HepG2 (cell line): ENCODE measurements at regions of chr5 and their contacts with region 1.

Region 1: DNA sequence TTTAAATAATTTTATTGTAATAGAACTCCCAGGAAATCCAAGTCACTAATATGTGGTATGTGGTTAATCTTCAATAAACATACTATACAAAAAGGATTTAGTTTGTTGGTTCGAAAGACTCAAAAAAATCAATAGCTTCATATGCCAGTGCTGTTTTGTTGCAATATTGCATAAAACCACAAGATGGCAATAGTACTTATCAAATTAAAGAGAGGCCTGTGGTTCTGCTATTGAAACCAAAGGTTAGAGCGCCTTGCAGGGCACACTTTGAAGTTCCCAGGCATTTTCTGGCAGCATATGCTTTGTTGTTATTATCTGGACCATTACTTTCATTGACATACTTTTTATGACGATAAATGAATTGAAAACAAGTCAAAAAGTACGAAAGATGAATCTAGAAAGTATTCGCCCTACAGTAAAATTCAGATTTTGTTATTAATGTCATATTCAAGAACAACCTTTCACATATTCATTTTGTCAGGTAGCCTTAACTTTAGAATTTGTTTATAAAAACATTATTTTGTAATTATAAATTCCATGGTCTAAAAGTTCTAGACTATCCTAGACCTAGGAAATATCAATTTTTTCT is 316.3 kb downstream of the MCTP1 start:
- DNase-seq: peak; percentile 75
- ATAC-seq: peak; percentile 83
- H3K4me3 ChIP-seq: no peak overlapping the region
- H3K27ac ChIP-seq: no peak overlapping the region
- H3K4me1 ChIP-seq: no peaks in the 10 kb centered on the region
- H3K27me3 ChIP-seq: no peaks in the 10 kb centered on the region
- CTCF ChIP-seq: peak; percentile 72
- EP300 ChIP-seq: no peak
- POLR2A ChIP-seq: no peak
- RAD21 ChIP-seq: peak; percentile 44

Region 2: DNA sequence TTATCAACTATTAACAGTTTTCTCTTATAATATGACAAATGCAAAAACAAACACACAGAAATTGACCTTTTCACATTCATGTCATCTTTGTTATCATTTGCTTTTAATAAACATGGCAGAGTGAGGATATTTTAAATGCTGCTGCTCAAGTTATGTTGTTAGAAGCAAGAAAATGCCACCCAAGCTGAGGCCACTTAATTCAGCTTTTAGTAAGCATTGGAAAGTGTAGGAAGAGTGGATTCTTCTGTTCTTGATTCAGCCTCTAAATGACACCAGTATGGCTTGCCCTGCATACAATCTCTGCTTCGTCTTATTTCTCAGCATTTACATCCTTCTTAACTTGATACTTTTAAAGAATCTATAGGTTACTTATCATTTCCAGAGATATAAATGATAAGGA is 806.8 kb before region 1 on chr5:
- CTCF ChIA-PET with region 1: no interaction called
- POLR2A ChIA-PET with region 1: no interaction called
- in situ Hi-C with region 1: no loop called
- intact Hi-C with region 1: no loop called
- DNase-seq: no peak
- ATAC-seq: no peak
- H3K4me3 ChIP-seq: no peak overlapping the region
- H3K27ac ChIP-seq: no peak overlapping the region
- H3K4me1 ChIP-seq: no peaks in the 10 kb centered on the region
- H3K27me3 ChIP-seq: no peaks in the 10 kb centered on the region
- CTCF ChIP-seq: no peak
- EP300 ChIP-seq: no peak
- POLR2A ChIP-seq: no peak
- RAD21 ChIP-seq: no peak

Region 3: DNA sequence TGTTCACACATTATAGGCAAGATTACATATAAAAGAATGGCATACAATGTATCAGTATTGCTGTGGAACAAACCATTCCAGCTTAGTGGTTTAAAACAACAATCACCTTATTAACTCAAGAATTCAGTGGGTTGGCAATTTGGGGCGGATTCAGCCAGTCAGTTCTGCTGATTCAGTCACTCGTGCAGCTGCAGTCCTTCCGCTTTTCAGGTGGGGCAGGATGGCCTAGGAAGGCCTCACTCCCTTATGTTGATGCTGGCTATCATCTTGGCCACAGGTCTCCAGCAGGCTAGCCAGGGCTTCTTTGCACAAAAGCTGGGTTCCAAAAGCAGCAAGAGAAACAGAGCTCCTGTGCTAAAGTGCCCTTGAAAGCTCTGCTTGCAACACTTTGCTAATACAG is 165.7 kb after region 1 on chr5:
- CTCF ChIA-PET with region 1: no interaction called
- POLR2A ChIA-PET with region 1: no interaction called
- in situ Hi-C with region 1: no loop called
- intact Hi-C with region 1: no loop called
- DNase-seq: no peak
- ATAC-seq: no peak
- H3K4me3 ChIP-seq: no peak overlapping the region
- H3K27ac ChIP-seq: no peak overlapping the region
- H3K4me1 ChIP-seq: peaks cover 6% of the 10 kb centered on the region; the same call in 1 of the 2 replicates
- H3K27me3 ChIP-seq: no peaks in the 10 kb centered on the region
- CTCF ChIP-seq: no peak
- EP300 ChIP-seq: no peak
- POLR2A ChIP-seq: no peak
- RAD21 ChIP-seq: no peak

Region 4: GRCh38 chr5:95178046-95178651 is 209.5 kb after region 1 on chr5:
- CTCF ChIA-PET with region 1: no interaction called
- POLR2A ChIA-PET with region 1: no interaction called
- in situ Hi-C with region 1: no loop called
- intact Hi-C with region 1: no loop called
- DNase-seq: peak; percentile 7
- ATAC-seq: peak; percentile 78
- H3K4me3 ChIP-seq: no peak overlapping the region
- H3K27ac ChIP-seq: no peak overlapping the region
- H3K4me1 ChIP-seq: no peaks in the 10 kb centered on the region
- H3K27me3 ChIP-seq: no peaks in the 10 kb centered on the region
- CTCF ChIP-seq: no peak
- EP300 ChIP-seq: no peak
- POLR2A ChIP-seq: no peak
- RAD21 ChIP-seq: no peak

Region 5: DNA sequence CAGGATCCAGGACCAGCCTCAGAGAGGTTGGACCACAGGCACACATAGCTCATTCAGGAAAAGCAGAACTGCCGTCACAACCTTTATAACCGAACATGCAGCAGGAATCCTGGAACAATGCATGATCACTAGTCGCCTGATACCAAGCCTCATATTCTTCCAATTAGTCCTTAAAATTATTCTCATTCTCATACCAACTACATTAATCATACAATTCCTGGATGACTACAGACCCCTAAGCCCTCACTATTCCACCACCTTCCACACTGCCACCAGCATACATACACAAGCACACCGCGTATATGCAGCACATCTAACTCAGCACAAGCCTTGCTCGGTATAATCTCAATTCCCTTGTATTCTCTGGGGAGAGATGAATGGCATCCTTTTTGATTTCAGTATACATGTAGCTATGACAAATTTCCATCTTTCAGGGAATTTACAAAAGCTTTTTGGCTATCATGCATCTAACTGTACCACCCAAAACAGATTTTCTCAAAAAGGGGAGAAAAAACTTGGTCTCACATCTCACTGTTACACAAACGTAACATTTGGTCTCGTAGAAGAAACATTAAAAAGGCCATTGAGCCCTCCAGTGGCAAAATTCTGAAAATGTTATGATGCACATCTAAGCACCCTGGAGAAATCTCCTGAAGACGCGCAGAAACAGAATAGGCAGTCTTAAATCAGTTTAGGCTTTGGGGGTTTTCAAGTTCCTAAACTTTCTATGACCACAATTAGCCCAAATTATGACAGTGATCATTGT is 270.1 kb after region 1 on chr5:
- CTCF ChIA-PET with region 1: no interaction called
- POLR2A ChIA-PET with region 1: no interaction called
- in situ Hi-C with region 1: no loop called
- intact Hi-C with region 1: loop called (anchors 1 kb)
- DNase-seq: no peak
- ATAC-seq: no peak
- H3K4me3 ChIP-seq: no peak overlapping the region
- H3K27ac ChIP-seq: no peak overlapping the region
- H3K4me1 ChIP-seq: no peaks in the 10 kb centered on the region
- H3K27me3 ChIP-seq: no peaks in the 10 kb centered on the region; a peak in 1 of 5 replicates
- CTCF ChIP-seq: peak; percentile 36
- EP300 ChIP-seq: no peak
- POLR2A ChIP-seq: no peak
- RAD21 ChIP-seq: no peak

Region 6: DNA sequence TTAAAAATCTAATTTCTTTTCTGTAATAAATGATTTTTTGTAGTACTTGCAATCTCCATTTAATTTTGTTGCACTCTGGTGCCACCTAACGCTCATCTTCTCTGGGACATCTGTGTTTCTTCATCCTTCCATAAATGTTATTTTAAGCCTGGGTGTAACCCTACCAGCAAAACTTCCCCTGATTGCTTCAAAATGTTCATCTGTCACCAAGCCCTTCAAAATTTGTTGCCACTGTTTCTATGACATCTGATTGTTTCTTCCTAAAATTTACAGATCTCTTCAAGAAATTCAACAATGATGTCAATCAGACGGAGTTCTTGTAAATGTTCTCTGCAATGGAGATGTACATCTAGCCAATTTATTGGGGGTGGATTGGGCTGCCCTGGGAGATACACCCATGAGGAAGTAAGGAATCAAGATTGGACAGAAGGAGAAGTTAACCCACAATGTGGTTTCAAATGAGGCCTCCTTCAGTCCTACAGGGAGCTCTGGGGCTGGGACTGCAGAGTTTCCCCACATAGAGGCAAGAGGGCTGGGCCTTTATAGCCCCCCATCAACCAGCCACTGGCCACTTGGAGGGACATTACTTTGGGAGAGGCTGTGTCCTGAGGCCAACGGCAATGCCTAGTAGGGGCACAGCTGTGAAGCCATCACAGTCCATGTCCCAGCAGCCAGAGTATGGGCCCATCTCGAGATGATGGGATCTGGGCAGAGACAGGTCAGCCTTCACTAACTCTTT is 293.0 kb after region 1 on chr5:
- CTCF ChIA-PET with region 1: interaction called, 3 read pairs
- POLR2A ChIA-PET with region 1: no interaction called
- in situ Hi-C with region 1: loop called (anchors 5 kb)
- intact Hi-C with region 1: loop called (anchors 1 kb)
- DNase-seq: peak; percentile 37
- ATAC-seq: peak; percentile 44; the same call in 2 of the 3 replicates
- H3K4me3 ChIP-seq: no peak overlapping the region
- H3K27ac ChIP-seq: no peak overlapping the region
- H3K4me1 ChIP-seq: peaks cover 35% of the 10 kb centered on the region
- H3K27me3 ChIP-seq: no peaks in the 10 kb centered on the region
- CTCF ChIP-seq: peak; percentile 45; the same call in 1 of the 2 replicates
- EP300 ChIP-seq: no peak
- POLR2A ChIP-seq: no peak
- RAD21 ChIP-seq: no peak